GM10248 (cell line): ENCODE measurements at regions of chr9 and their contacts with region 1.

Region 1: GRCh38 chr9:133023117-133023890 is 7.5 kb upstream of the GTF3C5 start:
- DNase-seq: peak; percentile 46
- CTCF ChIP-seq: no peak

Region 2: GRCh38 chr9:133004091-133004998 is 19.0 kb before region 1 on chr9:
- CTCF ChIA-PET with region 1: interaction called, 19 read pairs
- POLR2A ChIA-PET with region 1: no interaction called
- DNase-seq: no peak
- CTCF ChIP-seq: no peak

Region 3: GRCh38 chr9:133035669-133036068 is 12.4 kb after region 1 on chr9:
- CTCF ChIA-PET with region 1: interaction called, 89 read pairs
- POLR2A ChIA-PET with region 1: no interaction called
- DNase-seq: no peak
- CTCF ChIP-seq: no peak

Region 4: DNA sequence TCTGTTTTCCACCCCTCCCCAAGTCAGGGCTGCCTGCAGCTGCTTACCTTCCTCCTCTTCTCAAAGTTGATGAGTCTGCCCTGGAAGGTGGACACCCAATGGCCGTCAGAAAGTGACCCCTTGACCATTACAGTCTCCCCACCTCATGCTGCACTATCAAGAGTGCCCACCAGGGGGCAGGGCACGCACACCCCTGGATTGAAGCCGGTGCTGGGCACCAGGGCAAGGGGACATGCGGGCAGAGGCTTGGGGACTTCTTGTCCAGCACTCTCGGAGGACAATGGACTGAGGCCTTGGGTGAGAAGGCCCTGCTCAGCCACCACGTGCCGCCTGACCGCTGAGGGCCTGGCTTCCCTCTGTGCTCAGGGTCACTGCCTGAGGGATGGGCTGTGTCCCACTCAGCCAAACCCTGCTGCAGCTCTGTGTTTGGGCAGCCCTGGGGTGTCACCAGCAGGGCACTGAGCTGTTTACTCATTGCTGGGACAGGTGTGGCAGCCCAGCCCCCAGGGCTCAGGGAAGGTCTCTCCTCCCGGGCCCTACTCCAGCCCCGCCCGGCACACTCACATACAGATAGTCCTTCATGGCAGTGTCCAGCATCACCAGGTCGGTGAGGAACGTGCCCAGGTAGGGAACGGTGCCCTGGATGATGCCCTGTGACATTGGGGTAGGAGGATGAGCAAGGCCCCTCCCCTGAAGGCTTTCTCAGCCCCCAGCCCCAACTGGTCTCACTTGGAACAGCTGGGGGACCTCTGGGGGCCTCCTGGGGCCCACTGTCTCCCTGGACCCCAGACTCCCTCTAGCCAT is 80.1 kb after region 1 on chr9:
- CTCF ChIA-PET with region 1: interaction called, 19 read pairs
- POLR2A ChIA-PET with region 1: no interaction called
- DNase-seq: peak; percentile 81
- CTCF ChIP-seq: peak; percentile 84

Region 5: GRCh38 chr9:133149126-133150107 is 126.1 kb after region 1 on chr9:
- CTCF ChIA-PET with region 1: interaction called, 37 read pairs
- POLR2A ChIA-PET with region 1: no interaction called
- DNase-seq: peak; percentile 95
- CTCF ChIP-seq: peak; percentile 29

Region 6: DNA sequence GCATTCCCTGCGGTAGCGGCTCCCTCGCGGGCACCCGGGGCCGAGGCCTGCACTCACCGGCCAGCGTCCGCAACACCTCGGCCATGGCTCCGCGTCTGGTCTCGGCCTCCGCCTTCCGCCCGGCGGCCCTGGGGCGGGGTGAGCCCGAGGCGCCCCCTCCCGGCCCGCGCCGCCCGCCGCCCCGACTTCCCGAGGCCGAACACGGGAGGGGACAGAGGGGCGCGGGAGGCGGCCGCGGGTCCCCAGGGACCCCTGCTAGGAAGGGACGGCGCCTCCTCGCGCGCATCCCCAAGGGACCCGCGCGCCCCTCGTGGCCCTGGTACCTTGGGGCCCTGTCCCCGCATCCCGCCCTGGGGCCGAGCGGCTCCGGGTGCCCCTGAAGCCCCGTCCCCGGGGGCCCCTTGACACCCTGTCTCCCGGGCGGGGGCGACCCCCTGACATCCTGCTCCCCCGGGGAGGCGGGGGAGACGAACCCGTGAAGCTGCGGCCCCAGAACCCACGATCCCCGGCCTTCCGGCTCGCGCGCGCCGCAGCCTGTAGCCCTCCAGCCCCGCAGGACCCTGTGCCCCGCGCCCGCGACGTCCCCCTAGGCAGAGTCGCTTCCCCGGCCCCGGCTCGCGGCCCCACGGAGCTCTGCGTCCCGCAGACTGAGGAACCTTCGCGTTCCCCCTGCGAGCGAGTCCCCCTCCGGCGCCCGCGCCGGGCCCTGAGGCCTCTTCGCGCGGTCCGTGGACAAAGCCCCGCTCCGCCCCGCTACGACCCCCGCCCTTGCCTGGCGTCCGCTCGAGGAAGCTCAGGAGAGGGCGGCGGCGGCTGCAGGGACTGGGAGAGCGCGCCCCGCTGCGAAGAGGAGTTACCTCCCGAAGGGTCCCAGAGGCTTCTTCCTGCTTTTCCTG is 252.0 kb after region 1 on chr9 and contains the start of gene ABO:
- CTCF ChIA-PET with region 1: no interaction called
- POLR2A ChIA-PET with region 1: no interaction called
- DNase-seq: peak; percentile 22
- CTCF ChIP-seq: no peak